Heart left ventricle (tissue), 16 donors: ENCODE measurements at regions of chr11 and their contacts with region 1.

Region 1: GRCh38 chr11:107017433-107018227 is 646 bp downstream of the GUCY1A2 start:
- DNase-seq: peak; percentile 37 to 73 (median 57)
- ATAC-seq: peak; percentile 45 to 85 (median 80)
- H3K4me3 ChIP-seq: peak overlapping the region; percentile 12 to 67 (median 54)
- H3K27ac ChIP-seq: peak overlapping the region in 11 of 12 donors; percentile 31 to 79 (median 56)
- H3K4me1 ChIP-seq: peaks cover 0 to 24% (median 5%) of the 10 kb centered on the region in 12 donors
- H3K27me3 ChIP-seq: peaks cover 0 to 44% (median 18%) of the 10 kb centered on the region in 9 donors
- CTCF ChIP-seq: peak in 11 of 12 donors; percentile 6 to 58 (median 46)
- POLR2A ChIP-seq: no peak

Region 2: GRCh38 chr11:106714199-106714598 is 303.4 kb before region 1 on chr11:
- intact Hi-C with region 1: loop called in 2 of 10 experiments (anchors 5 kb)
- DNase-seq: no peak
- ATAC-seq: no peak
- H3K4me3 ChIP-seq: no peak overlapping the region
- H3K27ac ChIP-seq: no peak overlapping the region
- H3K4me1 ChIP-seq: no peaks in the 10 kb centered on the region
- H3K27me3 ChIP-seq: no peaks in the 10 kb centered on the region
- CTCF ChIP-seq: no peak
- POLR2A ChIP-seq: no peak

Region 3: GRCh38 chr11:106724293-106724892 is 293.2 kb before region 1 on chr11:
- intact Hi-C with region 1: loop called in 6 of 10 experiments (anchors 2 to 5 kb)
- DNase-seq: no peak
- ATAC-seq: peak in 1 of 4 donors; percentile 18
- H3K4me3 ChIP-seq: no peak overlapping the region
- H3K27ac ChIP-seq: no peak overlapping the region
- H3K4me1 ChIP-seq: no peaks in the 10 kb centered on the region
- H3K27me3 ChIP-seq: no peaks in the 10 kb centered on the region
- CTCF ChIP-seq: no peak
- POLR2A ChIP-seq: no peak